ENCODE measurements at regions of chr3 and their contacts with region 1.

Region 1: DNA sequence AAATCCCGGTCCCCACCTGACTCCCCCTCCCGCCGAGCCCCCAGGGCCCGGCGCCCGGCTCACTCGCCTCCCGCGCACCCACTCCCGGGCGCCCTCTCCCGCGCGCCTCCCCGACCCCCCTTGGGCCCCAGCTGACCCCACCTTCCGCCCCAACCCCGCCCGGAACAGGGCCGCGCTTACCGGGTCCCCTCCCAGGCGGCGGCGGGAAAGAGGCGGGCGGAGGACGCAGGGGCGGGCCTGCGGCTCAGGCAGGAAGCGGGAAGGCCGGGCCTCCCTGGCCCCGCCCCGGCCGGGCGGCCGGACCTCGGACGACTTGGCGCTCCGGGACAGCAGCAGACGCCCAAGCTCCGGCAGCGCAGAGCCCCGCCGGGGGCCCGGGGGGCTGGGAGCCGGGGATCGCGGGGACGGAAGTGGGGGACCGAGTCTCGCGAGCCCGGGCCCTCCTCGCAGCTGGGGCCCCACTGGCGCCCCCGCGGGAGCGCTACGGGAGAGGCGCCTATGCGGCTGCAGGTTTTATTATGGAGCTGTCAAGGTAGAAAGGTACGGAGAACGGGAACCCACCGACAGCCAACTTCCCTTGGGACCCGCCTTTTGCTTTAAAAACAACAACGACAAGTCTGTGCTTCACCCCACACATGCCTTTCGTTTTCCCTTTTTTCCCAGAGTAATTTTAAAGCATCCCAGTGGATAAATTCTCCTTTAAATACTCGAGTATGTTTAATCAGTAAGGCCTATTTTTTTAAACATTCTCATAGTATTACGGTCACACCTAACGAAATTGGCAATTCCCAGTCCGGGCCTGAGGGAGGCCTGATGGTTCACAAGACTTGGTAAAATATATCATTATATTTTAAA is at the start of gene SLC41A3:
- DNase-seq: peak; percentile 51 to 91 (median 82)
- ATAC-seq: peak; percentile 86
- H3K4me3 ChIP-seq: peak within 1 kb of the TSS; percentile 58 to 71
- H3K4me3 Mint-ChIP-seq: peak within 1 kb of the TSS; percentile 84
- H3K27ac ChIP-seq: peak within 1 kb of the TSS; percentile 71 to 80
- H3K27ac Mint-ChIP-seq: peak within 1 kb of the TSS; percentile 81
- H3K4me1 ChIP-seq: peaks cover 11% of the 10 kb centered on the region
- H3K4me1 Mint-ChIP-seq: peaks cover 26% of the 10 kb centered on the region
- H3K27me3 ChIP-seq: no peaks in the 10 kb centered on the region
- H3K27me3 Mint-ChIP-seq: no peaks in the 10 kb centered on the region
- CTCF ChIP-seq: peak; percentile 54
- total RNA-seq, gene SLC41A3: 24.0 to 26.1 TPM

Region 2: DNA sequence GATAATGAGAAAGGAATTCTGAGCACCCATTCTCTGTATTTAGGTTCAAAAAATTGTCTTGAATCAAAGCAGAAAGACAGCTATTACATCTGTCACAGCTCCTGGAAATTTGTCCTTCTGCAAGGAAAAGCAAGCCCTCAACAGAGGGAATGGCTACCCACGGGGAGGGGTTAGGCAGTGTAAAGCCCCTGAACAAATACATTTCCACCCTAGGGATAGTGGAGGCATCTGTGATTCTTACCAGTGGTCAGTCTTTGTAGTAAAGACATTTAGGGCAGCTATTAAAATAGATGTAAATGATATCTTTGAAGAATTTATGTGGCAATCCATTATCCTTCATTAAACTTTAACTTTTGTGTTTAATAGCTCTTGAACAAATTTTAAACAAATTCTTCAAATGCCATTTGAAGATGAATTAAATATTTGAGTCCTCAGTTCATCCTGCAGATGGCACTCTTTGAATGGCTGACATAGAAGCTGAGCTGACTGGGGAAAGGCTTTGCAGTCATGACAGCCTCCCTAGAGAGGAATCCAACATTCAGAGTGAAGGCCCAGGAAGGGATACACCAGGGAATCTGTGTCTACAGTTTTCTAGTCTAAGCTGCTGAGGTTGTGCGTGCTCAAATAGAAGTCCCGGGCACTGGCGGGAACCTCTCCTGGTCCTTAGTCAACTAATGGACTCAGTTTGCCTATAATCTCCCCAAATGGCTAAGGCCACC is 1732.6 kb before region 1 on chr3:
- CTCF ChIA-PET with region 1: no interaction called
- POLR2A ChIA-PET with region 1: no interaction called
- intact Hi-C with region 1: no loop called
- DNase-seq: no peak
- ATAC-seq: no peak
- H3K4me3 ChIP-seq: no peak overlapping the region
- H3K4me3 Mint-ChIP-seq: no peak overlapping the region
- H3K27ac ChIP-seq: no peak overlapping the region
- H3K27ac Mint-ChIP-seq: no peak overlapping the region
- H3K4me1 ChIP-seq: no peaks in the 10 kb centered on the region
- H3K4me1 Mint-ChIP-seq: no peaks in the 10 kb centered on the region
- H3K27me3 ChIP-seq: no peaks in the 10 kb centered on the region
- H3K27me3 Mint-ChIP-seq: no peaks in the 10 kb centered on the region
- CTCF ChIP-seq: no peak

Region 3: DNA sequence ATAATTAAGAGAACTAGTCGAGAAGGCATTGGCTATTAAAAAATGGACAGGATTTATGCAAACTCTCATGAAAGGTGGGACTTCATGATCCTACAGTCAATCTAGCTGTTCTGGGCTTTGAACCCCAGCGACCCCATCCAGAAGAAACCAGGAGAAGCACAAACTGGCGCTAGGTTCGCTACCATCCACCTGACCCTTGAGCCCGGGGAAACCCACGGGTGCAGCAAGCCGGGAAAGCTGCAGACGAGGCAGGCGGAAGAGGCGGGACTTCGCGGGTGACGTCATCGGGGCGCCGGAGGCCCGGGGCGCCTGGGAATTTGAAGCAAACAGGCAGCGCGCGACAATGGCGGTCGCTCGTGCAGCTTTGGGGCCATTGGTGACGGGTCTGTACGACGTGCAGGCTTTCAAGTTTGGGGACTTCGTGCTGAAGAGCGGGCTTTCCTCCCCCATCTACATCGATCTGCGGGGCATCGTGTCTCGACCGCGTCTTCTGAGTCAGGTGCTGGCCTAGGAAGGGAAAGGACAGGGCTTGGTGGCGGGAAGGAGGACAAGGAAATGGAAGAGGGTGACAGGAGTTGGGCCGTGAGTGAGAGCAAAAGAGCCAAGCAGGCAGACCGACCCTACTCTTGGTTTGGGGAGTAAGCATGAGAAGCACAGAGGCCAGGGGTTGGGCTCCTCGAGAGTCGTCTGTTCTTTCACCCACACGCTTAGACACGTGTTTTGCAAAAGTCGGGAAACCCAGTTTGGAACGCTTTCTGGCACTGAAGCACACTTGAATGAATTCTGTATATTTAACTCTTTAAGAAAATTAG is 1353.8 kb before region 1 on chr3 and contains the start of gene UMPS:
- CTCF ChIA-PET with region 1: no interaction called
- POLR2A ChIA-PET with region 1: no interaction called
- intact Hi-C with region 1: loop called in 1 of 2 experiments (anchors 5 kb)
- DNase-seq: peak; percentile 82 to 95 (median 93)
- ATAC-seq: peak; percentile 91
- H3K4me3 ChIP-seq: peak within 1 kb of the TSS; percentile 96 to 97
- H3K4me3 Mint-ChIP-seq: peak within 1 kb of the TSS; percentile 99
- H3K27ac ChIP-seq: peak within 1 kb of the TSS; percentile 82 to 93
- H3K27ac Mint-ChIP-seq: peak within 1 kb of the TSS; percentile 99
- H3K4me1 ChIP-seq: peaks cover 29% of the 10 kb centered on the region
- H3K4me1 Mint-ChIP-seq: peaks cover 39% of the 10 kb centered on the region
- H3K27me3 ChIP-seq: peaks cover 0 to 4% of the 10 kb centered on the region in 2 experiments
- H3K27me3 Mint-ChIP-seq: peaks cover 10% of the 10 kb centered on the region
- CTCF ChIP-seq: no peak
- total RNA-seq, gene UMPS: 16.7 to 19.8 TPM

Region 4: GRCh38 chr3:125594581-125595011 is 489.5 kb before region 1 on chr3:
- CTCF ChIA-PET with region 1: no interaction called
- POLR2A ChIA-PET with region 1: no interaction called
- intact Hi-C with region 1: loop called (anchors 5 to 10 kb)
- DNase-seq: peak in 2 of 9 experiments; percentile 6 to 17
- ATAC-seq: no peak
- H3K4me3 ChIP-seq: peak overlapping the region; percentile 85 to 91
- H3K4me3 Mint-ChIP-seq: peak overlapping the region; percentile 92
- H3K27ac ChIP-seq: peak overlapping the region; percentile 68 to 87
- H3K27ac Mint-ChIP-seq: peak overlapping the region; percentile 77
- H3K4me1 ChIP-seq: peaks cover 16% of the 10 kb centered on the region
- H3K4me1 Mint-ChIP-seq: peaks cover 44% of the 10 kb centered on the region
- H3K27me3 ChIP-seq: no peaks in the 10 kb centered on the region
- H3K27me3 Mint-ChIP-seq: no peaks in the 10 kb centered on the region
- CTCF ChIP-seq: no peak

Region 5: DNA sequence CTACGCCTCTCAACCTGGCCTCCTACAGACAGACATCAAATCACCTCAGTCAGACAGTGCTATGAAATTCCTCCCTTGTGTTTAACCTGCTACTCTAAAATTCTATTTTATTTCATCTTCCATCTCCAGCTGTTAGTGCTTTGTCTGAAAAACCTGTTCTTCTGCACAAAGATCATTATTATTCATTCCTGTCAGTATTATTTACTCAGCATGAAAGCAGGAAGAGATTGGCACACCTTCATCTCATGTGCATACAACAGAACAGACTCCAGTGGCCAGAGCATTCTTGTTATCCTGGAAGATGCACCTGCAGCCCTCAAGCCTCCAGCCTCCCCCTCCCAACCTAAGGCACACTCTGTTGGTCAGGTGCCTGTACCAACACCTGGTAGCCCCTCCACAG is 117.0 kb before region 1 on chr3:
- CTCF ChIA-PET with region 1: interaction called, 4 read pairs
- POLR2A ChIA-PET with region 1: no interaction called
- intact Hi-C with region 1: loop called (anchors 5 to 10 kb)
- DNase-seq: no peak
- ATAC-seq: no peak
- H3K4me3 ChIP-seq: no peak overlapping the region
- H3K4me3 Mint-ChIP-seq: no peak overlapping the region
- H3K27ac ChIP-seq: no peak overlapping the region
- H3K27ac Mint-ChIP-seq: no peak overlapping the region
- H3K4me1 ChIP-seq: peaks cover 4% of the 10 kb centered on the region
- H3K4me1 Mint-ChIP-seq: peaks cover 4% of the 10 kb centered on the region
- H3K27me3 ChIP-seq: peaks cover 0 to 4% of the 10 kb centered on the region in 2 experiments
- H3K27me3 Mint-ChIP-seq: peaks cover 21% of the 10 kb centered on the region
- CTCF ChIP-seq: no peak

Region 6: DNA sequence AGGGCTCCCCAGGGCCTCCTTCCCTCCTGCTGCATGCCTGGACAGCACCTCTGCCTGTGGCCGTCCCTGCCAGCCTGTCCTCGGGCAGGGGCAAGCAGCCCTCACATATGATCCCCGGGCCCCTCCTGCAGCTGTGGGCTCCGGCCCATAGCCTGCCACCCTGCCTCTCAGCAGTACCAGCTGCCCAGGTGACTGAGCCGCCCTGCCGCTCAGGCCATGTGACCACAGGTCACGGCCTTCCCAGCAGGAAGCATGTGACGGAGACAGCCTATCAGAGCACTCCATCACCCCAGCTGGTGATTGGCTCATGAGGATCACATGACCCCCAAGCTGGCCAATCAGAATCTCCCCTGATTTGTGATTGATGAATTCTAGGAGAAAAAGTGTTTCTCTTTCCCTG is 72.3 kb after region 1 on chr3:
- CTCF ChIA-PET with region 1: no interaction called
- POLR2A ChIA-PET with region 1: no interaction called
- intact Hi-C with region 1: no loop called
- DNase-seq: no peak
- ATAC-seq: no peak
- H3K4me3 ChIP-seq: no peak overlapping the region
- H3K4me3 Mint-ChIP-seq: no peak overlapping the region
- H3K27ac ChIP-seq: no peak overlapping the region
- H3K27ac Mint-ChIP-seq: no peak overlapping the region
- H3K4me1 ChIP-seq: no peaks in the 10 kb centered on the region
- H3K4me1 Mint-ChIP-seq: no peaks in the 10 kb centered on the region
- H3K27me3 ChIP-seq: no peaks in the 10 kb centered on the region
- H3K27me3 Mint-ChIP-seq: peaks cover 6% of the 10 kb centered on the region
- CTCF ChIP-seq: no peak

Region 7: GRCh38 chr3:126357295-126358037 is 273.3 kb after region 1 on chr3 and contains the start of gene KLF15:
- CTCF ChIA-PET with region 1: no interaction called
- POLR2A ChIA-PET with region 1: no interaction called
- intact Hi-C with region 1: loop called in 1 of 2 experiments (anchors 5 kb)
- DNase-seq: peak; percentile 46 to 85 (median 71)
- ATAC-seq: peak; percentile 94
- H3K4me3 ChIP-seq: peak within 1 kb of the TSS; percentile 50 to 79
- H3K4me3 Mint-ChIP-seq: peak within 1 kb of the TSS; percentile 90
- H3K27ac ChIP-seq: no peak within 1 kb of the TSS
- H3K27ac Mint-ChIP-seq: peak within 1 kb of the TSS; percentile 77
- H3K4me1 ChIP-seq: peaks cover 14% of the 10 kb centered on the region
- H3K4me1 Mint-ChIP-seq: peaks cover 15% of the 10 kb centered on the region
- H3K27me3 ChIP-seq: peaks cover 13 to 19% of the 10 kb centered on the region in 2 experiments
- H3K27me3 Mint-ChIP-seq: peaks cover 52% of the 10 kb centered on the region
- CTCF ChIP-seq: no peak
- total RNA-seq, gene KLF15: 0.16 TPM in 1 of 2 experiments, not detected in the other

Region 8: DNA sequence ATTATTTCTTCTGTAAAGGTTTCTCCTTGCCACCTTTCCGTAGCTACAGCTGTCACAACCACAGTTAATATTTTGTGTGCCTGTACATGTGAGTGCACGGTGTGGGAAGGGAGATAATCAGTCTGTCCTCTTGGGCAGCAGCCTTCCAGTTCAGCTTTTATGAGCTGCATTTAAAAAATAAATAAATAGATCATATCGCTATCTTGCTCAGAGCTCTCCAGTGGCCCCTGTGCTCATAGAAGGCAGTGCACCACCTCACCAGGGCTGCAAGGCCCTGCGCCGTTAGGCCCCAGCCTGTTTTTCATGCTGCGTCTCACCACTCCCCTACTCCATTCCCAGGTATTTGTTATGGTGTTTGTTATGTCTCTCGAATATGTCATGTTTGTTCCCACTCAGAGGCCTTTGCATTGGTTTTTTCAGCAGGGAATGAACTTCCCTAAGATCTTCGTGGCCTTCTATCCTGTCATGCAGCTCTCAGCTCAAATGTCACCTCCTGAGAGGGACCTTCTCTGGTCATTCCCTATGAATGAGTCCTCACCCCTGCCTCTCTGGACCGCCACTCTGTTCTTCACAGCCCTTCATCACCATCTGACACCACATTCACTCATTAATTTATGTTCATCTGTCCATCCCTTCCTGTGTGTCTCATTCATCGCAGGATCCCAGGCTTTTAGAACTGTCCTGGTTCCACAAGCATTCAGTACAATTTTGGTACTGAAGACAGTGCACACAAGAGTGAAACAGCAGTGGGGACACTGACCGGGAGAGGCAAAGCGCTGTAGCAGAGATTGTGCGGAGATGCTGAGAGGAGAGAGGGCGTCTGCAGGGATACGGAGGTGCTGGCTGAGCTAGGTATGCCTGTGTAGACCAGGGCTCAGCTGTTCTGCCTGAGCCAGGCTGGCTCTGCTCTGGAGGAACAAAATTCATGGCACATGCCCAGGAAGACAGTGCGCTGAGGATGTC is 752.0 kb after region 1 on chr3:
- CTCF ChIA-PET with region 1: no interaction called
- POLR2A ChIA-PET with region 1: no interaction called
- intact Hi-C with region 1: no loop called
- DNase-seq: no peak
- ATAC-seq: no peak
- H3K4me3 ChIP-seq: no peak overlapping the region
- H3K4me3 Mint-ChIP-seq: no peak overlapping the region
- H3K27ac ChIP-seq: no peak overlapping the region
- H3K27ac Mint-ChIP-seq: no peak overlapping the region
- H3K4me1 ChIP-seq: no peaks in the 10 kb centered on the region
- H3K4me1 Mint-ChIP-seq: no peaks in the 10 kb centered on the region
- H3K27me3 ChIP-seq: no peaks in the 10 kb centered on the region
- H3K27me3 Mint-ChIP-seq: no peaks in the 10 kb centered on the region
- CTCF ChIP-seq: no peak

Region 9: DNA sequence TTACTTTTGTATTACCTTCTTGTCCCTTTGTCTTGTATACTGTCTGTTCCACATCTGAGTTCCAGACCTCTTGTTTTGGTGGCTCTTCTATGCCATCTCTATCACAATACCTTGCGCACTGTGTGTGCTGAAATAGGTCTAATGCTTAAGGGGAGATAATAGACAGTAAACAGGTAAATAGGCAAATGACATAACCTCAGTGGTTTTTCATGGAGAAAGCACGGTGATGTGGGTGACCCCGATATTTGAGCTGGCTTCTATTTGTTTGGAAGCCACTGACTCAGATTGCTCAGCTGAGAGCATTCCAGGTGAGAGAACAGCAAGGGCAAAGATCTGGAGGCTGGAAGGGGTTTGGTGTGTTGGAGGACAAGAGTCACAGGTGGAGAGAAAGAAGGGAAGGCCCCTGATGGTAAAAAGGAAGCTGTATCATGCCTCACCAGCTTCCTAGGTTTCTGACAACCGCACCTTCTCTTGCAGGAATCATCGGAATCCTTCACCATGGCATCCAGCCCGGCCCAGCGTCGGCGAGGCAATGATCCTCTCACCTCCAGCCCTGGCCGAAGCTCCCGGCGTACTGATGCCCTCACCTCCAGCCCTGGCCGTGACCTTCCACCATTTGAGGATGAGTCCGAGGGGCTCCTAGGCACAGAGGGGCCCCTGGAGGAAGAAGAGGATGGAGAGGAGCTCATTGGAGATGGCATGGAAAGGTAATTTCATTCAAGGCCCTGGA is 1514.9 kb after region 1 on chr3:
- CTCF ChIA-PET with region 1: no interaction called
- POLR2A ChIA-PET with region 1: no interaction called
- intact Hi-C with region 1: loop called in 1 of 2 experiments (anchors 5 kb)
- DNase-seq: no peak
- ATAC-seq: no peak
- H3K4me3 ChIP-seq: peak overlapping the region; percentile 53 to 60
- H3K4me3 Mint-ChIP-seq: peak overlapping the region; percentile 78
- H3K27ac ChIP-seq: peak overlapping the region; percentile 53 to 69
- H3K27ac Mint-ChIP-seq: peak overlapping the region; percentile 76
- H3K4me1 ChIP-seq: peaks cover 11% of the 10 kb centered on the region
- H3K4me1 Mint-ChIP-seq: peaks cover 15% of the 10 kb centered on the region
- H3K27me3 ChIP-seq: no peaks in the 10 kb centered on the region
- H3K27me3 Mint-ChIP-seq: no peaks in the 10 kb centered on the region
- CTCF ChIP-seq: no peak

Region 10: GRCh38 chr3:128051837-128052594 is 1967.9 kb after region 1 on chr3 and contains the start of gene SEC61A1:
- CTCF ChIA-PET with region 1: no interaction called
- POLR2A ChIA-PET with region 1: no interaction called
- intact Hi-C with region 1: loop called in 1 of 2 experiments (anchors 10 kb)
- DNase-seq: peak; percentile 87 to 97 (median 95)
- ATAC-seq: peak; percentile 93
- H3K4me3 ChIP-seq: peak within 1 kb of the TSS; percentile 92 to 95
- H3K4me3 Mint-ChIP-seq: peak within 1 kb of the TSS; percentile 99
- H3K27ac ChIP-seq: peak within 1 kb of the TSS; percentile 78 to 85
- H3K27ac Mint-ChIP-seq: peak within 1 kb of the TSS; percentile 98
- H3K4me1 ChIP-seq: peaks cover 35% of the 10 kb centered on the region
- H3K4me1 Mint-ChIP-seq: peaks cover 43% of the 10 kb centered on the region
- H3K27me3 ChIP-seq: no peaks in the 10 kb centered on the region
- H3K27me3 Mint-ChIP-seq: no peaks in the 10 kb centered on the region
- CTCF ChIP-seq: no peak
- total RNA-seq, gene SEC61A1: 125 to 131 TPM

Measured in CD8-positive, alpha-beta T cell (primary cell).